B cell (primary cell): ENCODE measurements at regions of chr11 and their contacts with region 1.

Region 1: DNA sequence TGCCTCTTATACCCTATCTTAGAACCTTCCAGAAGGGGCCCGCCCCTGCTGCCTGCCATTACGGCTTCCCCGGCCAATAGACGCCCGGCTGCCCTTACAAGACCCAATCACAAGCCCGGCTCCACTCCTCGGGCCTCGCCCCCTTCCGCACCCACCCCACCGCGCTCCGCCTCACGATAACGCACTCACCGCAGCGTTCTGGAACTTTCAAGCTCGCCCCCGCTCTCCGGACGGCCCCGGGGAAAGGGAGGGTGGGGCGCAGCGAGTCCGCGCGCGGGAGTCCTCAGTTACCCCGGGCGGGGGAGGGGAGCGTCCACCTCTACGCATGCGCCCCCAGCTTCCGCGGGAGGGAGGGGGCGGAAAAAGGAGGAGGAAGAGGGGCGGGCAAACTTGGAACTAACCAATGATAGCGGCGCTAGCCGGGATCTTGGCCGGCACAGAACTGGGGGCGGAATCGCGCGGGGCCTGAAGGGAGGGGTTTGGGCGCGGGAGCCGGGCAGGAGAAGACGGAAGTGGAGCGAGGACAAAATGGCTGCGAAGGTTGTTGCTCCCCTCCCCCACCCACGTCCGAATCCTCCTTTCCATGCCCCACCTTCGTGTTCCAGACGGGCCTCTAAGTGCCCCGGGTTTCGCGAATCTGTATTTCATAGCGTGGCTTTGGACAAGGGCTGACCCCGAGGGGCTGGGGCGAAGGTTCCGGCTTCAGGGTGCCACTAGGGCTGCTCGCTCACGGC is 389 bp upstream of the HSPA8 start:
- DNase-seq: peak; percentile 100
- ATAC-seq: peak; percentile 81
- H3K4me3 ChIP-seq: peak overlapping the region; percentile 88 to 100 (median 96)
- H3K4me3 Mint-ChIP-seq: peak overlapping the region; percentile 99
- H3K27ac ChIP-seq: peak overlapping the region; percentile 99 to 100
- H3K27ac Mint-ChIP-seq: peak overlapping the region; percentile 100
- H3K4me1 ChIP-seq: peaks cover 63 to 68% of the 10 kb centered on the region in 2 donors
- H3K4me1 Mint-ChIP-seq: peaks cover 69% of the 10 kb centered on the region
- H3K27me3 ChIP-seq: no peaks in the 10 kb centered on the region
- H3K27me3 Mint-ChIP-seq: no peaks in the 10 kb centered on the region
- CTCF ChIP-seq: no peak

Region 2: GRCh38 chr11:122882857-122883645 is 179.3 kb before region 1 on chr11:
- CTCF ChIA-PET with region 1: interaction called, 3 read pairs
- POLR2A ChIA-PET with region 1: interaction called, 5 read pairs
- intact Hi-C with region 1: loop called (anchors 2 kb)
- DNase-seq: peak; percentile 68
- ATAC-seq: peak; percentile 72
- H3K4me3 ChIP-seq: peak overlapping the region; percentile 12 to 85 (median 77)
- H3K4me3 Mint-ChIP-seq: peak overlapping the region; percentile 89
- H3K27ac ChIP-seq: peak overlapping the region; percentile 74 to 80
- H3K27ac Mint-ChIP-seq: peak overlapping the region; percentile 85
- H3K4me1 ChIP-seq: peaks cover 10 to 12% of the 10 kb centered on the region in 2 donors
- H3K4me1 Mint-ChIP-seq: peaks cover 11% of the 10 kb centered on the region
- H3K27me3 ChIP-seq: peaks cover 0 to 19% (median 6%) of the 10 kb centered on the region in 4 experiments
- H3K27me3 Mint-ChIP-seq: peaks cover 22% of the 10 kb centered on the region
- CTCF ChIP-seq: no peak

Region 3: DNA sequence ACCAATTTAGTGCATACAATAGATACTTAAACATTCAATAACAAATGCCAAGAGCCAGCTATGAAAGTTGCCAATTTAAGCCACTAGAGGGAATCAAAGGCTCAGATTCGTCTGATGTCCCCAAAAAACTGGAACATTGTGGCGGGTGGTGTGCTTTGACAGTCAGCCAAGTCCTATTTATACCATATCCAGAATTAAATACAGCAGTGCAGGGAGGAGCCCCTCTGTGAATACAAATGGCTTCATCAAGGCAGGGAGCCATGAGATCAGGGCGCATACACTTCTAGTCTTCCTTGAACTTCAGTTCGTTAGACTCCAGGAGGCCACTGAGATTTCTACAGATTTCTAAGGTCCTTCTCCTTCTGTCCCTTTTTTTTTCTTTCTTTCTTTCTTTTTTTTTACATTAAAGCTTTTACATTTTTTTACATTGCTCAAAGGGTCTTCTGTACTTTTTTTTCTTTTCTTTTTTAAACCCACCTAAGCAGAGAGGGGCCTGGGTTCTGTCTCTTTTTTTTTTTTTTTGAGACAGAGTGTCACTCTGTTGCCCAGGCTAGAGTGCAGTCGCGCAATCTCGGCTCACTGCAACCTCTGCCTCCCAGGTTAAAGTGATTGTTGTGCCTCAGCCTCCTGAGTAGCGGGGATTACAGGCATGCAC is 41.1 kb after region 1 on chr11:
- CTCF ChIA-PET with region 1: interaction called, 12 read pairs
- POLR2A ChIA-PET with region 1: no interaction called
- intact Hi-C with region 1: loop called (anchors 5 kb)
- DNase-seq: peak; percentile 40
- ATAC-seq: no peak
- H3K4me3 ChIP-seq: no peak overlapping the region
- H3K4me3 Mint-ChIP-seq: no peak overlapping the region
- H3K27ac ChIP-seq: no peak overlapping the region
- H3K27ac Mint-ChIP-seq: no peak overlapping the region
- H3K4me1 ChIP-seq: no peaks in the 10 kb centered on the region
- H3K4me1 Mint-ChIP-seq: peaks cover 3% of the 10 kb centered on the region
- H3K27me3 ChIP-seq: peaks cover 0 to 2% (median 0%) of the 10 kb centered on the region in 4 experiments
- H3K27me3 Mint-ChIP-seq: peaks cover 24% of the 10 kb centered on the region
- CTCF ChIP-seq: peak; percentile 61